GM12878 (cell line): ENCODE measurements at regions of chr1 and their contacts with region 1.

Region 1: GRCh38 chr1:156104065-156104810 is 10.3 kb upstream of the LMNA start:
- DNase-seq: no peak
- ATAC-seq: peak; percentile 44
- H3K4me3 ChIP-seq: no peak overlapping the region
- H3K27ac ChIP-seq: peak overlapping the region; percentile 50
- H3K4me1 ChIP-seq: peaks cover 30% of the 10 kb centered on the region
- H3K27me3 ChIP-seq: no peaks in the 10 kb centered on the region
- CTCF ChIP-seq: no peak
- EP300 ChIP-seq: no peak
- POLR2A ChIP-seq: no peak
- RAD21 ChIP-seq: no peak

Region 2: GRCh38 chr1:156114101-156114916 is 10.1 kb after region 1 on chr1 and contains the start of gene LMNA:
- CTCF ChIA-PET with region 1: interaction called, 1,294 read pairs
- POLR2A ChIA-PET with region 1: interaction called, 128 read pairs
- RAD21 ChIA-PET with region 1: interaction called, 695 read pairs
- SMC1A ChIA-PET with region 1: interaction called, 874 read pairs
- in situ Hi-C with region 1: no loop called
- intact Hi-C with region 1: no loop called
- DNase-seq: peak; percentile 48
- ATAC-seq: peak; percentile 88
- H3K4me3 ChIP-seq: peak within 1 kb of the TSS; percentile 94
- H3K27ac ChIP-seq: peak within 1 kb of the TSS; percentile 53; the same call in 1 of the 2 replicates
- H3K4me1 ChIP-seq: peaks cover 12% of the 10 kb centered on the region
- H3K27me3 ChIP-seq: no peaks in the 10 kb centered on the region
- CTCF ChIP-seq: no peak
- EP300 ChIP-seq: no peak; a peak in 1 of 4 replicates
- POLR2A ChIP-seq: peak; percentile 82
- RAD21 ChIP-seq: no peak
- polyA plus RNA-seq, gene LMNA: 0.42 to 6.0 TPM

Region 3: DNA sequence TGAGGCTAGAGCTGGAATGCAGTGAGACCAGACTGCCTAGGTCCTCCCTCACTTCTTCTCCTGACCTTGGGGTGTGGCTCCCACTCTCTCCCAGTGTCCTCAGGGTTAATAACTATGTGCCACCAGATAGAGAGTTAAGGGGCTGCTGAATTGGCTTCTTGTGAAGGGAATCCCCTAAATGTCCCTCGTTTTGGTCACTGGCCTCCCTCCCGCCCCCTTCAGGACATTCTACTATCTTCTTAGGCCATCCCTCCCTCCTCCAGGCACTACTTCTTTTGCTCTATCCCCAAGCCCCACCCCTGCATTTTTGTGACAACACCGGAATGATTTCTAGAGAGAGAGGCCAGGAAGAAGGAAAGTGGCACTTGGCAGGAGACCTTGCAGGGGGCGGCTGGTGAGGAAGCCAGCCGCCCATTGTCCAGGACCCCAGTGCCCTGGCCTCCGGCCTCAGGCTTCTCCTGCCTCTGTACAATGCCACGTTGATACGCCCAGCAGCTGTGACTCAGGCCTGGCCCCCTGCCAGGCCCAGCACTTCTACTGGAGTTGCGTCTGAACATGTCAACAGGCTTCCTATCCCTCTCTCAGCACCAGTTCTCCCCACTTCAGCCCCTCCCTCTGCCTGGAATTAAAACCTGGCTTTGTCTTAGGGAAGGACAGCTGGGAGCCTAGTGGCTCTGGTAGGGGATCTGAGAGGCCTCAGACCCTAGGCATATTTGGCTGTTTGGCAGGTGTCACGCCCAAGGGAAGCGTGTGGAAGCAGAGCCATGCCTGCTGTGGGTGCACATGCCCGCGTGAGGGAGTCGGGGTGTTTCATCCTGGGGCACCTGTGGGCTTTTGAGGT is 19.3 kb after region 1 on chr1:
- CTCF ChIA-PET with region 1: interaction called, 1,294 read pairs
- POLR2A ChIA-PET with region 1: interaction called, 128 read pairs
- RAD21 ChIA-PET with region 1: interaction called, 695 read pairs
- SMC1A ChIA-PET with region 1: interaction called, 874 read pairs
- in situ Hi-C with region 1: no loop called
- intact Hi-C with region 1: no loop called
- DNase-seq: peak; percentile 46
- ATAC-seq: peak; percentile 22
- H3K4me3 ChIP-seq: 0 out of 2 replicates have a peak overlapping the region, but pooled peaks have one; percentile 30
- H3K27ac ChIP-seq: peak overlapping the region; percentile 94
- H3K4me1 ChIP-seq: peaks cover 69% of the 10 kb centered on the region
- H3K27me3 ChIP-seq: no peaks in the 10 kb centered on the region
- CTCF ChIP-seq: peak; percentile 25 to 32 (median 29); a peak in 4 of 6 replicates
- EP300 ChIP-seq: no peak
- POLR2A ChIP-seq: no peak
- RAD21 ChIP-seq: 0 out of 2 replicates have a peak, but pooled peaks have one; percentile 4